Ascending aorta (tissue), 2 donors: ENCODE measurements at regions of chr5 and their contacts with region 1.

Region 1: DNA sequence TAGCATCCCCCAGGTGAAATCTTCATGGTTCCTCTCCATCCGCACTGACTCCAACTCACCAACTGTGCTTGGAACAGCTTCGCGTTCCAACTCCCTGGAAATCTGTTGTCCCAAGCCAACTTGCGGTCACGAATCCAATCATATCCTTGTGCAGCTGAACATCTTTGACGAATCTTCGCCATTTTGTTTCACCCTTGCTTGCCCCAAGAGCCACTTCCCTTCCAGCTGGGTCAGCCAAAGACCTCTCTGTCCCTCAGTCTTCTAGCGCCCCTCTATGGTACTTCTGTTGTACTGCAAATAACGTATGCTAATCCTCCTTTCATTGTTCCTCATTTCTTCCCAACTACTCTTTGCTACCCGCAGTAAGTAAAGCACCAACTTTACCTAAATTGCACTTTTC is 61.0 kb upstream of the TARS1 start:
- DNase-seq: no peak
- H3K4me3 ChIP-seq: no peak overlapping the region
- H3K27ac ChIP-seq: no peak overlapping the region
- H3K4me1 ChIP-seq: no peaks in the 10 kb centered on the region
- H3K27me3 ChIP-seq: no peaks in the 10 kb centered on the region
- CTCF ChIP-seq: peak in 2 of 3 experiments; percentile 34 to 45

Region 2: GRCh38 chr5:33509036-33509435 is 129.3 kb after region 1 on chr5:
- intact Hi-C with region 1: loop called (anchors 5 kb)
- DNase-seq: no peak
- H3K4me3 ChIP-seq: no peak overlapping the region
- H3K27ac ChIP-seq: no peak overlapping the region
- H3K4me1 ChIP-seq: peaks cover 0 to 10% of the 10 kb centered on the region in 2 donors
- H3K27me3 ChIP-seq: no peaks in the 10 kb centered on the region
- CTCF ChIP-seq: no peak

Region 3: GRCh38 chr5:33649796-33650482 is 270.2 kb after region 1 on chr5:
- intact Hi-C with region 1: no loop called
- DNase-seq: no peak
- H3K4me3 ChIP-seq: no peak overlapping the region
- H3K27ac ChIP-seq: no peak overlapping the region
- H3K4me1 ChIP-seq: no peaks in the 10 kb centered on the region
- H3K27me3 ChIP-seq: no peaks in the 10 kb centered on the region
- CTCF ChIP-seq: no peak